ENCODE measurements at regions of chr22 and their contacts with region 1.

Region 1: DNA sequence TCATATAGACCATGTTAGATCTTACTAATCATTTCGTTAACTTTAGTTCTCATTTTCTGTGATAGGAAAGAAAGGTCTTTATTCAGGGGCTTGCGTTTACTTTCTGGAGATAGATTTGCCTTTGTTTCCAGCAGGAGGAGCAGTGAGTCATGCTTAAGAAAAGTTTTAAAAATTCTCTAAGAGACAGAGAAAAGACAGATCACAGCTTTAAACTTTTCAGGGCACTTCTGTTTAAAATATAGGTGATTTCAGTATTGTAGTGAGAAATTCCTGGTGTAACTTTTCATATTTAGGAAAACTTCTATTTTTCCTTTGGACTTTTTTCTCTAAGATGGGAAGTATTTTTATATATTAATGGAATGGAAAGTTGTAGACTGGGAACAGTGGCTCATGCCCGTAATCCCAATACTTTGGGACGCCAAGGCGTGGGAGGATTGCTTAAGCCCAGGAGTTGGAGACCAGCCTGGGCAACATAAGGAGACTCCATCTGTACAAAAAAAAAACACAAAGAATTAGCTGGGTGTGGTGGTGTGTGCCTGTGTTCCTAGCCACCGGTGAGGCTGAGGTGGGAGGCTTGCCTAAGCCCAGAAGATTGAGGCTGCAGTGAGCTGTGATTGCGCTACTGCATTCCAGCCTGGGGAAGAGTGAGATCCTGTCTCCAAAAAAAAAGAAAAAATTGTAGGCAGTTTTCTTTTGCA is 60.3 kb downstream of the ATXN10 start:
- DNase-seq: no peak
- CTCF ChIP-seq: peak; percentile 22

Region 2: GRCh38 chr22:45720839-45721378 is 11.0 kb before region 1 on chr22:
- CTCF ChIA-PET with region 1: interaction called, 19 read pairs
- POLR2A ChIA-PET with region 1: no interaction called
- DNase-seq: no peak
- CTCF ChIP-seq: no peak

Region 3: DNA sequence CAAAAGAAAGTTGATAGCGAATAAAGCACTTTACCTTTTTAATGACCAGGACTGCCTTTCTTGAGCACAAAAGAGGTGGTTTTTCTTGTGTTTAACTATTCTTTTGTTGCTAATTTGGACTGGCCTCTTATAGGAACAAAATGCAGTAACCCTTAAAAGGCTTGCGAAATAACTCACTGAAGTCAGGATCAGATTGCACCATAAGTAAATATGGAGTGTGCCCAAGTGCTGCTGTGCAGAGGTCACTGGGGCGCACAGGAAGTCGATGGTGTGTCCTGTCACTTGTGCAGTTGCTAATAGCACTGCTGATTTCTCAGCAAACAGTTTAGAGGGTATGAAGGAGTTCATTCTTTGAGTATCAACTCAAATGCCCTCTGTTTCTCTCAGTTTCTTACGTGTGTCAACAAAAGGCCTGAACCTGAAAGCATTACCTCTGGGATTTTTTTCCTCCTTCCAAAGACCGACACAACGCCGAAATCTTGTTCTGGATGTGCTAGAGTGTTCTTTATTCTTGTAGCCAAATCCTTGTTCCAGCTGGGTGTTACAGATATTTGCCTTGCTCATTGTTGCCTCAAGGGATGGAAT is 11.0 kb after region 1 on chr22:
- CTCF ChIA-PET with region 1: interaction called, 10 read pairs
- POLR2A ChIA-PET with region 1: interaction called, 4 read pairs
- DNase-seq: no peak
- CTCF ChIP-seq: no peak

Region 4: DNA sequence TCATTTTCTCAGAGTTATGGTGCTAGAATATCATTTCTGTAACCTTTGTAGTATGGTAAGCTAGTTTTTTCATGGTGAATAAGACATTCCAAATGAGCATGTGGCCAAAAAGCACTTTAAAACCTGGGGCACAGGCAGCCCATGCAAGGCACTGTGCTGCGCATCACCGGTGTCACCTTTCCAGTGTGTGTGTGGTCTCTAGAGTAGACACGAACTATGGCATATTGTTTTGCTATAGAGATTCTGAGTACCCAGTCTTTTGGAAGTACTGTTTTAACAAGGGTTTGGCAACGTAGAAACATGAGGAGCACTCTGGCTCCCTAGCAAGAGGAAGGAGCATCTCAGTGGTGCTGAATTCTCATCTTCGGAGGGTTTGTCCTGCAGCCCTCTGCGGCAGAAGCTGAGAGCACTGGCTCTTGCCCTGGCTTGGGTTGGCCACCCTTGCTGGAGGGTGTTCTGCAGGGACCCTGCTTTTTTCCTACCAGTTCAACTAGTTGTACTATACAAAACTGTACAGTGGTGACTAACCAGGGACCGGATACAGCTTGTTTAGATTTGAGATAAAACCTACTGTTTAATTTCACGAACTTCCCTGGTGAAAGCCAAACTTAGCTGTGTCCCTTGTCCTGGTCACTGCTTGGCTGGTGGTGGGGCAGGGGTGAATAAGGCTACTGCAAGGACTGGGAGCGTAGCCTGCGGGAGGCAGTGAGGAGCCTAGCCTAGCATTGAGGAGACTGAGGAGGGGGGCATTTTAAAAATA is 75.4 kb after region 1 on chr22:
- CTCF ChIA-PET with region 1: no interaction called
- POLR2A ChIA-PET with region 1: no interaction called
- DNase-seq: no peak
- CTCF ChIP-seq: no peak

Measured in GM10248 (cell line).